ENCODE measurements at regions of chr11 and their contacts with region 1.

Region 1: GRCh38 chr11:75142714-75143419 is 8.0 kb upstream of the SLCO2B1 start:
- DNase-seq: peak; percentile 83 to 93
- ATAC-seq: peak; percentile 82 to 87
- H3K4me3 ChIP-seq: no peak overlapping the region
- H3K27ac ChIP-seq: peak overlapping the region; percentile 63 to 77
- H3K4me1 ChIP-seq: peaks cover 11% of the 10 kb centered on the region
- CTCF ChIP-seq: no peak
- EP300 ChIP-seq: no peak
- POLR2A ChIP-seq: 0 out of 2 replicates have a peak, but pooled peaks have one; percentile 8
- RAD21 ChIP-seq: no peak

Region 2: GRCh38 chr11:75022759-75023396 is 120.0 kb before region 1 on chr11:
- CTCF ChIA-PET with region 1: interaction called, 84 read pairs
- POLR2A ChIA-PET with region 1: interaction called, 6 read pairs
- DNase-seq: peak; percentile 81 to 86
- ATAC-seq: peak; percentile 96 to 99
- H3K4me3 ChIP-seq: no peak overlapping the region
- H3K27ac ChIP-seq: no peak overlapping the region
- H3K4me1 ChIP-seq: no peaks in the 10 kb centered on the region
- CTCF ChIP-seq: peak; percentile 95
- EP300 ChIP-seq: no peak
- POLR2A ChIP-seq: no peak
- RAD21 ChIP-seq: peak; percentile 91 to 98

Region 3: DNA sequence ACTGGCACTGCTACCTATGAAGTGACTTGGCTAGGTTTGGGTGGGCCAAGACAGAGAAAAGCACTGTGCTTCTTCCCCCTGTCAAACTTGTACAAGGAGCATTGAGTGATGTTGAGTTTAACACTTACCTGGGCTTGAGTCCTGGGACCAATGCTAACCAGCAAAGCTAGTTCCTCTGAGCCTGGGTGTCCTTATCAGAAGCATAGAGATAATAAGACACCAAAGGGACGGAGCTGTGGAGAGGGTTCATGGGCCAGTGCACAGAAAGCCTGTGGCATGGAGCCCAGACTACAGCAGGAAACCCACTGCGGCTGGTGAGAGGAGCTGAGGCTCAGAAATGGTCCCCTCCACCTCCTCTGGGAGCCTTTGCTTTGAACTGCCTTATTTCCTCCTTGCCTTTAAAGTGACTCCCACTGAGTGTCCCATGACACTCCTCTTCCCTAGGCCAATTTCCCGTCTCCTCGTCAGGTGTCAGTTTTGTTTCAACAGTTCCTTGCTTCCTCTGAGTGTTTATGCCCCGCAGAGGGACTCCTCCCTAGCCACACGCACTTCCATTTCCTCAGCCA is 17.4 kb after region 1 on chr11:
- CTCF ChIA-PET with region 1: interaction called, 162 read pairs
- POLR2A ChIA-PET with region 1: no interaction called
- DNase-seq: no peak
- ATAC-seq: no peak
- H3K4me3 ChIP-seq: no peak overlapping the region
- H3K27ac ChIP-seq: peak overlapping the region; percentile 1 to 31; a peak in 1 of 6 replicates
- H3K4me1 ChIP-seq: peaks cover 24% of the 10 kb centered on the region
- CTCF ChIP-seq: no peak
- EP300 ChIP-seq: no peak
- POLR2A ChIP-seq: no peak
- RAD21 ChIP-seq: no peak

Region 4: DNA sequence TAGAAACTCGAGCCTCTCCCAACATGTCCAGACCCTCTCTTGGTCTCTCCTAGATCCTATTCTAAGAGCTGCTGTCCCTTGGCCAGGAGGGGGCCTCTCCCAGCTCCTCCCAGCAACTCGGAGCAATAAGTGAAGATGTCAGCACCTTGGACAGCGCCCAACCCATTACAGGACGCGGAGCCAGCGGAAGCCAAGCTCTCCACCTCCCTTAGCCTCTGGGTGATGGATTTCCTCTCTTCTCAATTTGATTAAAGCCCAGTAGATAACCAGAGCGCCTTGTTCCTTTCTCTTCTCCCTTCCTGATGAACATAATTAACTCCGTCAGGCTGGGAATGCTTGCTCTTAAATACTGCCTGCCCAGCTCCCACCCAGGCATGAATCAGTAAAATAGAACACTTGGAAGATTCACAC is 71.5 kb after region 1 on chr11:
- CTCF ChIA-PET with region 1: interaction called, 291 read pairs
- POLR2A ChIA-PET with region 1: no interaction called
- DNase-seq: peak; percentile 79 to 80
- ATAC-seq: peak; percentile 87 to 98
- H3K4me3 ChIP-seq: no peak overlapping the region
- H3K27ac ChIP-seq: no peak overlapping the region
- H3K4me1 ChIP-seq: no peaks in the 10 kb centered on the region
- CTCF ChIP-seq: peak; percentile 15; the same call in 1 of the 3 replicates
- EP300 ChIP-seq: no peak
- POLR2A ChIP-seq: no peak
- RAD21 ChIP-seq: peak in 1 of 2 experiments; percentile 21; a peak in 1 of 5 replicates

Region 5: GRCh38 chr11:75270896-75271418 is 128.1 kb after region 1 on chr11:
- CTCF ChIA-PET with region 1: interaction called, 30 read pairs
- POLR2A ChIA-PET with region 1: no interaction called
- DNase-seq: peak; percentile 37 to 47
- ATAC-seq: peak; percentile 49 to 63; a peak in 3 of 6 replicates
- H3K4me3 ChIP-seq: no peak overlapping the region
- H3K27ac ChIP-seq: no peak overlapping the region
- H3K4me1 ChIP-seq: no peaks in the 10 kb centered on the region
- CTCF ChIP-seq: peak; percentile 56
- EP300 ChIP-seq: no peak
- POLR2A ChIP-seq: no peak
- RAD21 ChIP-seq: peak; percentile 53 to 56; a peak in 4 of 5 replicates

Region 6: GRCh38 chr11:75286826-75287465 is 144.1 kb after region 1 on chr11:
- CTCF ChIA-PET with region 1: no interaction called
- POLR2A ChIA-PET with region 1: no interaction called
- DNase-seq: peak in 1 of 2 experiments; percentile 25
- ATAC-seq: no peak
- H3K4me3 ChIP-seq: no peak overlapping the region
- H3K27ac ChIP-seq: no peak overlapping the region
- H3K4me1 ChIP-seq: no peaks in the 10 kb centered on the region
- CTCF ChIP-seq: no peak
- EP300 ChIP-seq: no peak
- POLR2A ChIP-seq: no peak
- RAD21 ChIP-seq: no peak

Measured in A549 (cell line).